CD4-positive, alpha-beta memory T cell (primary cell): ENCODE measurements at regions of chr7 and their contacts with region 1.

Region 1: GRCh38 chr7:30412810-30413504 is 65.6 kb downstream of the NOD1 start:
- DNase-seq: peak in 4 of 5 donors; percentile 10 to 27 (median 20)
- H3K4me3 ChIP-seq: no peak overlapping the region
- H3K4me3 Mint-ChIP-seq: no peak overlapping the region
- H3K27ac ChIP-seq: no peak overlapping the region
- H3K27ac Mint-ChIP-seq: peak overlapping the region in 2 of 7 donors; percentile 7 to 48
- H3K4me1 ChIP-seq: no peaks in the 10 kb centered on the region
- H3K4me1 Mint-ChIP-seq: no peaks in the 10 kb centered on the region
- H3K27me3 ChIP-seq: no peaks in the 10 kb centered on the region
- H3K27me3 Mint-ChIP-seq: no peaks in the 10 kb centered on the region

Region 2: GRCh38 chr7:30164567-30164966 is 248.4 kb before region 1 on chr7:
- CTCF ChIA-PET with region 1: interaction called, 6 read pairs
- POLR2A ChIA-PET with region 1: no interaction called
- intact Hi-C with region 1: loop called (anchors 2 kb)
- DNase-seq: peak in 1 of 5 donors; percentile 20
- H3K4me3 ChIP-seq: no peak overlapping the region
- H3K4me3 Mint-ChIP-seq: no peak overlapping the region
- H3K27ac ChIP-seq: no peak overlapping the region
- H3K27ac Mint-ChIP-seq: no peak overlapping the region
- H3K4me1 ChIP-seq: peaks cover 15% of the 10 kb centered on the region
- H3K4me1 Mint-ChIP-seq: peaks cover 12 to 30% (median 20%) of the 10 kb centered on the region in 4 donors
- H3K27me3 ChIP-seq: no peaks in the 10 kb centered on the region
- H3K27me3 Mint-ChIP-seq: no peaks in the 10 kb centered on the region

Region 3: GRCh38 chr7:30225863-30226613 is 186.9 kb before region 1 on chr7:
- CTCF ChIA-PET with region 1: no interaction called
- POLR2A ChIA-PET with region 1: no interaction called
- intact Hi-C with region 1: no loop called
- DNase-seq: no peak
- H3K4me3 ChIP-seq: no peak overlapping the region
- H3K4me3 Mint-ChIP-seq: no peak overlapping the region
- H3K27ac ChIP-seq: no peak overlapping the region
- H3K27ac Mint-ChIP-seq: peak overlapping the region in 1 of 7 donors; percentile 35
- H3K4me1 ChIP-seq: no peaks in the 10 kb centered on the region
- H3K4me1 Mint-ChIP-seq: no peaks in the 10 kb centered on the region
- H3K27me3 ChIP-seq: no peaks in the 10 kb centered on the region
- H3K27me3 Mint-ChIP-seq: peaks cover 0 to 3% of the 10 kb centered on the region in 2 donors

Region 4: GRCh38 chr7:30276203-30276900 is 136.6 kb before region 1 on chr7:
- CTCF ChIA-PET with region 1: interaction called, 35 read pairs
- POLR2A ChIA-PET with region 1: no interaction called
- intact Hi-C with region 1: no loop called
- DNase-seq: peak; percentile 41 to 53 (median 44)
- H3K4me3 ChIP-seq: no peak overlapping the region
- H3K4me3 Mint-ChIP-seq: peak overlapping the region in 1 of 8 donors; percentile 20
- H3K27ac ChIP-seq: no peak overlapping the region
- H3K27ac Mint-ChIP-seq: no peak overlapping the region
- H3K4me1 ChIP-seq: no peaks in the 10 kb centered on the region
- H3K4me1 Mint-ChIP-seq: peaks cover 3 to 8% (median 4%) of the 10 kb centered on the region in 4 donors
- H3K27me3 ChIP-seq: no peaks in the 10 kb centered on the region
- H3K27me3 Mint-ChIP-seq: peaks cover 0 to 1% of the 10 kb centered on the region in 2 donors